Activated CD4-positive, alpha-beta memory T cell treated with anti-CD3 and anti-CD28 coated beads for 36 hours (primary cell): ENCODE measurements at regions of chr10 and their contacts with region 1.

Region 1: DNA sequence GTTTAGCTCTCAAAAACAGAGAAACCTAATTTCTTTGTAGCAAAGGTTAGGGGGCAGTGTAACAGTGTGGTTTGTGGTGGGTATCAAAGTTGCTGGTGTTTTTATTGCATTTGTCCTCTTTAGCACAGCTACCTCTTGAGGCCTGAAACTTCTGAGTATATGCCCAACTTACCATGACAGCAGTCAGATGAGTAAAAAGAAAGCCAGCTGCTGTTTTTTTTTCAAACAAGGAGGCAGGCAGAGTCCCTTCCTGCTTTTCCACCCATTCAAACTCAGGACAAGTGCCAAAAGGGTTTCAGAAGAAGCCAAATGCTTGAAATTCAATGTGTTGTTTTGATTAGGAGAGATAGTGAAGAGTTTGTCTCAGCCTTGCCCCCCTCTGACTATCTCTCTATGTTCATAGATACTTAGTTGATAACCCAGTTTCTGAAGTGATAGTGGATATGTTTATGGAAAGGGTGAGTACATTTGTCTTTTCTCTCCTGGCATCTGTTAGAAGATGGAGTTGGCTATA is 23.1 kb downstream of the GBF1 start:
- DNase-seq: no peak
- H3K4me3 Mint-ChIP-seq: peak overlapping the region; percentile 41
- H3K27ac Mint-ChIP-seq: peak overlapping the region; percentile 97
- H3K4me1 Mint-ChIP-seq: peaks cover 73% of the 10 kb centered on the region
- H3K27me3 Mint-ChIP-seq: no peaks in the 10 kb centered on the region

Region 2: DNA sequence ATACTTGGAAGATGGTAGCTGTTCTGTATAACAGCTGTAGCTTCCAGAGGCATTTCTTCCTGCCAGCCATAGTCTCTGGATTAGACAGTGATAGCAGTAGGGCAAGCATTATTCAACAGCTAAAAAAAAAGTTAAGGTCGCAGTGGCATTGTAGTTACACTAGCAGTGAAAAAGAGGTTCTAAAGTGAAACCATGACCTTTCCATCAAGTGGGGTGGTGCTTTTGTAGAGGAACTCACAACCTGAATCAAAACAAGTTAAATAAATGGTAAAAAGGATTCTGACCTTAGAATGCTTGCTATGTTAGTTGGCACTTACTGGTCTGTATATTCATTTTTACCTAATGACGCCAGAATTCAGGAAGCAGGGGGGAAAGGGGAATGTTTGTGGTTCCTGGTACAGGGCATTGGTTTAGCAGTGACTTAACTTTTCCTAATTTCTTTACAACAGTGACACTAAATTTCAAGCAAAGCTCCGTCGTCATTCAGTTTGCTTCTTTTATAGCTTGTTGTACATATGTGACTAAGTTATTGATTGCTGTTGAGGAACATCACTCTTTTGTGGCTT is 31.9 kb after region 1 on chr10:
- CTCF ChIA-PET with region 1: interaction called, 3 read pairs
- POLR2A ChIA-PET with region 1: interaction called, 5 read pairs
- intact Hi-C with region 1: loop called (anchors 2 kb)
- DNase-seq: no peak
- H3K4me3 Mint-ChIP-seq: peak overlapping the region; percentile 23
- H3K27ac Mint-ChIP-seq: peak overlapping the region; percentile 86
- H3K4me1 Mint-ChIP-seq: peaks cover 32% of the 10 kb centered on the region
- H3K27me3 Mint-ChIP-seq: no peaks in the 10 kb centered on the region

Region 3: DNA sequence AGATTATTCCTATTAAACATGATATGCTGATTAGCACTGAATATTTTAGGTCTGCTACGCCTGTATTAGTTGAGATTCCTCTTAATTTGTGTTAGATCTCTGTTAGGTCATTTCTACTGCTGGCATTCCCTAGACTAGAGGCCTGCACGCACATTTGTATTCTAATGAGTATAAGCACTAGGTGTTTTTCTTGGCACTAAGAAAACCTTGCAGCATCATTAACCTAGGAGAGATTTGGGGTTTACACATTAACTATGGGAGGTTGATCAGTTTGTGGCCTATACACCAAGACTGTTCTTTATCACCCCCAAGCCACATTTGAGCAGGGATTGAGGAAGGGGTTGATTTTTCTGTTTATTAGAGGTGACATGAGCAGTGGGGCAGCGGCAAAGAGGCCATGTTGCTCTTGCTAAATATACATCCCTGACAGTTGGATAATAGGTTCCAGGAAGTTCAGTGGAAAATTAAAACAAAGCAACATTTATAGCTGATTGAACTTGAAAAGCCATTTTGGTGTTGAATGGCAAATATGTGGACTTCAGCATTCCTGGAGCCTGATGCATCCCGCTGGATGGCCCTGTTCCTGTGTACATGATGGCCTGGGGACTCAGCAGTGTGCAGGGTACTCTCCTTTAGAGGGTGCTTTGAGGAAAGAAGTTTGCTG is 42.1 kb after region 1 on chr10:
- CTCF ChIA-PET with region 1: interaction called, 11 read pairs
- POLR2A ChIA-PET with region 1: interaction called, 4 read pairs
- intact Hi-C with region 1: loop called (anchors 1 kb)
- DNase-seq: no peak
- H3K4me3 Mint-ChIP-seq: no peak overlapping the region
- H3K27ac Mint-ChIP-seq: no peak overlapping the region
- H3K4me1 Mint-ChIP-seq: peaks cover 56% of the 10 kb centered on the region
- H3K27me3 Mint-ChIP-seq: no peaks in the 10 kb centered on the region

Region 4: DNA sequence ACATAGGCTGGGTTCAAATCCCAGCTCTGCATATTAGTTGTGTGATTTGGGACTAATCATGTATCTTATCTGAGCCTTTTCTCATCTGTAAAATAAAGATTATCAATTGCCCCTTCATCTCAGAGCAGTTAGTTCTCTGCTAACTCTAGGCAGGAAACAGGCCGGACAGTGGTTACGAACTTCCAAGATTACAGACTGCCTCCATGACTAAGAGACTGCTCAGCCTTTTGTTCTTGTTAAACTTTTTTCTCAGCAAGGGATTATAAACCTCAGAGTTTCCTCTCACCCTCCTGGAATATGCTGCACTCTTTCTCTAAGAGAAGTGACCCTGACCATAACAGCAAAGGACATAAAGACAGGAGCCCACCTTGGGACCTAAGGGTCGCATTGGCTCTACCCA is 74.5 kb after region 1 on chr10:
- CTCF ChIA-PET with region 1: interaction called, 6 read pairs
- POLR2A ChIA-PET with region 1: interaction called, 8 read pairs
- intact Hi-C with region 1: loop called (anchors 1 kb)
- DNase-seq: no peak
- H3K4me3 Mint-ChIP-seq: no peak overlapping the region
- H3K27ac Mint-ChIP-seq: peak overlapping the region; percentile 60
- H3K4me1 Mint-ChIP-seq: peaks cover 39% of the 10 kb centered on the region
- H3K27me3 Mint-ChIP-seq: no peaks in the 10 kb centered on the region